Colonic mucosa (tissue), 4 donors: ENCODE measurements at regions of chr6 and their contacts with region 1.

Region 1: GRCh38 chr6:32700391-32701040 is 34.1 kb upstream of the HLA-DQB1 start:
- DNase-seq: peak; percentile 48
- H3K4me3 ChIP-seq: no peak overlapping the region
- H3K27ac ChIP-seq: no peak overlapping the region
- H3K4me1 ChIP-seq: no peaks in the 10 kb centered on the region
- H3K27me3 ChIP-seq: no peaks in the 10 kb centered on the region
- CTCF ChIP-seq: peak; percentile 57

Region 2: DNA sequence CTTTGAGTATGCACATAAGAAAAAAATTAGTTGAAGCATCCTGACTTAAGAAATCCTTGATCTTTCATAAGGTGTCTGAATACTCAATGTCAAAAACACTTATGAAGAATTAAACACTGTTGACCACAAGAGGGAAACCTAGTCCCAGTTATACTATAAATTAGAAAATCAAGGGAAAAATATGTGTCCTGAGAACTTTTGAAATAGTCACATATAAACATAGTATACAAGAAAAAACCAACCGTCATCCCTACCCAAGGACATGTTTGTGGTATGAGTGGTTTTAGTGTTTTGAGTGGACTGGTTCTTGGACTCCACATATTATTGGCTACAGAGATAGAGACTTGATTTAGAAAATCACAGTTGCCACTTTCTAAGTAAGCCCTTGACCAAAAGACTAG is 268.5 kb before region 1 on chr6:
- intact Hi-C with region 1: loop called (anchors 5 kb)
- DNase-seq: no peak
- H3K4me3 ChIP-seq: no peak overlapping the region
- H3K27ac ChIP-seq: no peak overlapping the region
- H3K4me1 ChIP-seq: no peaks in the 10 kb centered on the region
- H3K27me3 ChIP-seq: no peaks in the 10 kb centered on the region
- CTCF ChIP-seq: peak; percentile 37

Region 3: GRCh38 chr6:32785781-32786533 is 85.4 kb after region 1 on chr6:
- intact Hi-C with region 1: loop called (anchors 5 kb)
- DNase-seq: peak; percentile 56
- H3K4me3 ChIP-seq: no peak overlapping the region
- H3K27ac ChIP-seq: no peak overlapping the region
- H3K4me1 ChIP-seq: no peaks in the 10 kb centered on the region
- H3K27me3 ChIP-seq: no peaks in the 10 kb centered on the region
- CTCF ChIP-seq: peak; percentile 44